Right ventricle myocardium superior (tissue), 1 donor: ENCODE measurements at regions of chr10 and their contacts with region 1.

Region 1: GRCh38 chr10:89029785-89030437 is 39.3 kb downstream of the FAS start:
- DNase-seq: peak; percentile 77
- ATAC-seq: peak; percentile 79

Region 2: DNA sequence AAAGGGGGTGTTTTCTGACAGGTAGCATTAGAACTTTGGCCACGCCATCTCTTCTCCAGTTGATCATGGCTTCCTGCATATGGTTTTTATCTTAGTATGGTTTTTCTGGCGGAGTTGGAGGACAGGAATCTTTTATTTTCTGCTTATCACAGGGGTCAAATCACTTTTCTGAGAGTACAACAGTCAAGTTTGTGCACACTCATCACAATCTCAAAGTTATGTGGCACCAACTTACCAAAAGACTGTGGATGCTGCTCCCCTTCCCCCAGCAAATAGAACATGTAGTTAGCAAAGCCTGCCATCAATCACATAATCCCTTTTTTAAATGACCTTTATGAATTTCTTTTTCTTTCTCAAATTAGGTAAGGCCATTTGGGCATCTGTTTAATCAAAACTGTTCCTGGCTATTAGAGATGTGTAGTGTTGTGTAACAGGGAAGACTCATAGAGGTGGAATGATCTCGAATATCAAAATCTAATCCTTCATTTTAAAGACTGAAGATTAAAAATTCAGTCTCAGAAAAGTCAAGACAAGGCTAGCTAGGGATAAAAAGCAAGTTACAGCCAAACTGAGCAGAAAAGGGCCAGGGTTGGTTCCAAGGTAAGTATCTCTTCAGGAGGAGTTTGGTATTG is 181.0 kb after region 1 on chr10:
- intact Hi-C with region 1: loop called (anchors 2 kb)
- DNase-seq: no peak
- ATAC-seq: no peak